Activated T-helper 2 cell treated with anti-CD3 and anti-CD28 coated beads, Interferon-gamma antibody, Interleukin-2, Interleukin-4, amounts not matched to agents 10 μg/mL and 5 μg/mL and 100 μg/mL, durations not matched to agents 14 hours and 24 hours and 36 hours (primary cell): ENCODE measurements at regions of chr7 and their contacts with region 1.

Region 1: DNA sequence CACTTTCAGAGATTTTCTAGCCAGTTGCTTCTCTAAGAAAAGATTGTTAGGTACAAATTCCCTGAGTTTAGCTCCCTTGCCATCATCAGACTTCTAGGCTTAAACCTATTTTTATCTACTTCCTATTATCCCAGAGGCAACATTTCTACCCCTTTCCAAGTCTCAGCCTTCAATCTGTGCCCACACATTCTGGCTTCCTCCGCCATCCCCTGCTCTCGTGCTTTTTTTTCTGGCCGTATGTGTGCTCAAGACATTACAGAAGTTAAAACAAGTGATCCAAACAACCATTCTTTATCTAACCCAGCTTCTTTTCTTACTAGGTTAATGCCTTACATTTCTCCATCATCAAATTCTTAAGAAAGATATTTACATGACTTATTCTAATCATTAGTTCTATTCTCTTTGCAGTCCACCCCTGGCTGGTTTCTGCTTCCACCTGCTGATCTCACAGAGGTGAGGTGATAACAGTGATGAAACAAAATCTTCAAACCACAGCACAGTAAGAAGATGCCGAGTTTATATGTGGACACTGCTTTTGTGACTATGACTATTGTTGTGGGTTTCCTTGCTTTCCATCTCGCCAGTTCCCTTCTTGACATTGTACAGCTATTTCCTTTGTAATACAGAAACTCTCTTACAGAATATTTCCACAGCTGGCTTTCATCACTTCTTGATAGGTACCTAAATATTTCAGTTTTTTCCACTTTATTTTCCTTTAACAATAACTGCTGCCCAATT is 18.3 kb upstream of the CDK6 start:
- DNase-seq: no peak
- H3K4me3 Mint-ChIP-seq: no peak overlapping the region
- H3K27ac Mint-ChIP-seq: peak overlapping the region; percentile 83
- H3K4me1 Mint-ChIP-seq: peaks cover 17% of the 10 kb centered on the region
- H3K27me3 Mint-ChIP-seq: no peaks in the 10 kb centered on the region

Region 2: DNA sequence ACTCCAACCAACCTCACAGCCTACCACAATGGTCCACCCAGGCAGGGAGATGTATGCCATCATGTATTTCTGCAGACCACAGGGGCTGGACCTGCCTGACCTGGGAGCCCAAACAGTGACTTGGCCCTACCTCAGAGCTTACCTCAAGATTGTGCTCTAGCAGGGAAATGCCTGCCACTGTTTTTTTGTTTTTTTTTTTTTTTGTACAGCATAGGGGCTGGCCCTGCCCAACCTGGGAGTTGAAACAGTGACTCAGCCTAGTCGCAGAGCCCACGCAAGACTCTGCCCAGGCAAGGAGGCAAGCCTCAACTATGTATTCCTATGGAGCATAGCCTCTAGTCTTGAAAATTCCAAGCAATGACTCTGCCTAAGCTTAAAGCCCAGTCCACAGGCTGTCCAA is 21.0 kb after region 1 on chr7:
- intact Hi-C with region 1: loop called (anchors 1 kb)
- DNase-seq: no peak
- H3K4me3 Mint-ChIP-seq: no peak overlapping the region
- H3K27ac Mint-ChIP-seq: peak overlapping the region; percentile 50
- H3K4me1 Mint-ChIP-seq: peaks cover 50% of the 10 kb centered on the region
- H3K27me3 Mint-ChIP-seq: no peaks in the 10 kb centered on the region

Region 3: DNA sequence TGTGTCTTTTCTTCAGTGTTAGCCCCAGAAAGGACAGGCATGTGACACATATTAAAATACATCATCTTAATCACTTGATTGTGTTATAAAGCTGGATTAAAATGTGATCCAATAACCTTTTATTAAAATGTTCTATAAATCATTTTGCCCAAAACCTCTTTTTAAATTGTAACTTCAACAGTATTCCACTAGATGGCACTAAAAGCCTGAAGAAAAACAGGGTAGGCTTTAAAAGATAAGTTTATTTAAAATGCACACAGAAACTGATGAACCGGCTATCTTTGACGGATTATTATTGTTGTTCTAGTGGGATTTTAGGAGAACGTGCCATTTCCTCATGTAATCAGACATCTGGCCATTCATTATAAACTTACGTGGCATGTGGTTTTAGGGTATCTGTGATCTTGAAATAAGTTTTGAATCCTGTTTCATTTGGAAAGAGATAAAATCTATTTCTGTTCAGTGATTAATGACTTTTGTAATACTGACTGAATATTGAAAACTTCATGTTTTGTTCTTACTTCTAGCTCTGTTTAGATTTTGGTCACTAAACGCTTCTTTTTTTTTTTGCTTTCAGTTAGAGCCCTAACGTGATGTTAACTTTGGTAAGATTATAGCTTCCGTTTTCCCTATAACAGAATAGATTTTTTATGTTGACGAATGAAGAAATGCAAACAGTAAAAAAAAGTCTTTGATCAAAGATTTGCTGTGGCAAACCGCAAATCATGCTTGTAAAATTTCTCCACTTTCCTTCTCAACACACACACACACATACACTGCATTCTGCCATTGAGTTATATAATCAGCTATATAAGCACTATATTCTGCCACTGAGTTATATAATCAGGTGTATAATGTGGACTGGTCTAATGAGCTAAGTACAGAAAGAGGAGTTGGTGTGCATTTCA is 391.1 kb after region 1 on chr7:
- intact Hi-C with region 1: no loop called
- DNase-seq: no peak
- H3K4me3 Mint-ChIP-seq: no peak overlapping the region
- H3K27ac Mint-ChIP-seq: no peak overlapping the region
- H3K4me1 Mint-ChIP-seq: no peaks in the 10 kb centered on the region
- H3K27me3 Mint-ChIP-seq: no peaks in the 10 kb centered on the region